Ovary (tissue), 10 donors: ENCODE measurements at regions of chrX and their contacts with region 1.

Region 1: DNA sequence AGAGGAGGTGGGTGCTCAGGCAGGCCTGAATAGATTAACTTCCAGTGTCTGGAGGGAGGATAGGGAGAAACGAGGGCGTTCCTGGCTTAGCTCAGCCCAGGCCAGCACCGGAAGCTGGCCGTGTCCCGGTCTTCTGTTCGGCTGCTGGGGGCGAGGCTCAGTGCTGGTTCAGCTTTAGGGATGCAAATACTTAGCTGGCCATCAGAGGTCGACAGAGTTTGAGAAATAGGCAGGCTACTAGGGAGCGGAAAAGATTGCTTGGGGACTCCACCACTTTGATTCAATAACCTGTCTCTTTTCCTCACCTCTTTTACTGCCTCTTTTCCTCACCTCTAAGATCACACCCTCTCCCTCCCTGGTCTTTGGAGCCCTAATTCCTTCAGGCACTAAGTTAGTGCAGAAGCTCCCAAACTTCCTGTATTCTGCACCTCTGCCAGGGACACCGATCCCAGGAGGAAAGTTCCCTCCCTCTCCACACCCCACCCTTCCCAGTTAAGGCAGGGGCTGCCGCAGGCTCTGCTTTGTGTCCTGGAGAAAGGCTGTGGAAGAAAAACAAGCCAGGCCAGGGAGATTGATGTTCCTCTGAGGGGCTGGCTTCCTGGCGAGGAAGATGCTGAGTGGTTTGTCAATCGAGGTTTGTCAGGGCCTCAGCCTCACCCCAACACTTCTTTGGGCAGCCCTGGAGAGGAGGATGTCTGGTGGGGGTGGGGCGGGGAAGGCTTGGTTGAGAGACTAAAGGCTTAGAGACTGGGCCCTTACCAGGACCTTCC is 6.0 kb upstream of the EFNB1 start:
- DNase-seq: peak in 3 of 5 donors; percentile 31 to 62 (median 61)
- H3K4me3 ChIP-seq: no peak overlapping the region
- H3K27ac ChIP-seq: no peak overlapping the region
- H3K4me1 ChIP-seq: no peaks in the 10 kb centered on the region
- H3K27me3 ChIP-seq: no peaks in the 10 kb centered on the region
- CTCF ChIP-seq: peak; percentile 32 to 45 (median 42)
- EP300 ChIP-seq: no peak
- POLR2A ChIP-seq: no peak

Region 2: GRCh38 chrX:69238114-69238886 is 415.5 kb after region 1 on chrX:
- intact Hi-C with region 1: loop called in 1 of 4 experiments (anchors 5 kb)
- DNase-seq: no peak
- H3K4me3 ChIP-seq: no peak overlapping the region
- H3K27ac ChIP-seq: no peak overlapping the region
- H3K4me1 ChIP-seq: no peaks in the 10 kb centered on the region
- H3K27me3 ChIP-seq: no peaks in the 10 kb centered on the region
- CTCF ChIP-seq: no peak
- EP300 ChIP-seq: no peak
- POLR2A ChIP-seq: no peak

Region 3: DNA sequence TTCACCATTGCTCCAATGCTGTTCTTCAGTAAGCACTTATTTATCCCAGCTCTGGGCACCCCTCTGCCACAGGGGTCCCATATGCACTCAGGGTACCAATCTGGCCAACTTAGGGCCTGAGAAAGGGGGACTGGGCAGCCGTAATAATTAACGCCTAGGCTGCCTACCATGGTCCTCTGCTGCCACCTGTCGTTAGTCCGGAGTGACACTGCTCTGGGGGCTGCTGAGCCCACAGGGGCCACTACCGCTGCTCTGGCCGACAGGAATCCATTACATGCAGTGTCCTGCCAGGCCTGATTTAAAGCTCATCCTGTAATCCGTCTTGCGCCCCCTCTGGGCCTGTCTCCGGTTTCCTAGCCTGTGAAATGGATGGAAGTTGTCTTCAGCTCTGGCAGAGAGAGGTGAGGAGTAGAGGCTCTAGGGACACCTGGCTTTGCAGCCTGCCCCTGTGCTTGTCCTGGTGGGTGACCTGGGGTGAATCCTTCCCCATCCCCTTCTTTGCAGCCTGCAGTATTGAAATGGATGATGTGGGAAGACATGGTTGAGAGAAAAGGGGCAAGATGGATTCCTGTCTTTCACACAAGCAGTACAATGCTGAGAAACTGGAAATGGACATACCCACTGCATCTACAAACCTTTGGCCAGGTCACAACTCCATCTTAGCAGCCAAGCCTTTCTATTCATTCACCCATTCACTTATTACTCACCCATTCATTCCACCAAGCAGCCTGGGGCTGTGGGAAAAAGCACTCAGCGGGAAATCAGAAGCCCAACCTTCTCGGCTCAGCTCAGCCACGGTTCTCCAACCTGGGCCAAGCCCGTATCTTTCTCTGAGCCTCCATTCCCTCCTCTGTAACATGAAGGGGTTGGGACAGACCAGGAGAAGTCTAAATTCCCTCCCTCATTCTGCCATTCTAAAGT is 565.0 kb after region 1 on chrX:
- intact Hi-C with region 1: loop called in 1 of 4 experiments (anchors 5 kb)
- DNase-seq: peak; percentile 31 to 64 (median 54)
- H3K4me3 ChIP-seq: no peak overlapping the region
- H3K27ac ChIP-seq: no peak overlapping the region
- H3K4me1 ChIP-seq: no peaks in the 10 kb centered on the region
- H3K27me3 ChIP-seq: no peaks in the 10 kb centered on the region
- CTCF ChIP-seq: peak in 2 of 3 donors; percentile 45 to 55
- EP300 ChIP-seq: no peak
- POLR2A ChIP-seq: no peak